Head of caudate nucleus (tissue), 42 donors: ENCODE measurements at regions of chr6 and their contacts with region 1.

Region 1: GRCh38 chr6:99590728-99591672 is 15.6 kb upstream of the PRDM13 start:
- DNase-seq: no peak

Region 2: GRCh38 chr6:99790679-99791078 is 199.7 kb after region 1 on chr6:
- intact Hi-C with region 1: no loop called
- DNase-seq: no peak

Region 3: DNA sequence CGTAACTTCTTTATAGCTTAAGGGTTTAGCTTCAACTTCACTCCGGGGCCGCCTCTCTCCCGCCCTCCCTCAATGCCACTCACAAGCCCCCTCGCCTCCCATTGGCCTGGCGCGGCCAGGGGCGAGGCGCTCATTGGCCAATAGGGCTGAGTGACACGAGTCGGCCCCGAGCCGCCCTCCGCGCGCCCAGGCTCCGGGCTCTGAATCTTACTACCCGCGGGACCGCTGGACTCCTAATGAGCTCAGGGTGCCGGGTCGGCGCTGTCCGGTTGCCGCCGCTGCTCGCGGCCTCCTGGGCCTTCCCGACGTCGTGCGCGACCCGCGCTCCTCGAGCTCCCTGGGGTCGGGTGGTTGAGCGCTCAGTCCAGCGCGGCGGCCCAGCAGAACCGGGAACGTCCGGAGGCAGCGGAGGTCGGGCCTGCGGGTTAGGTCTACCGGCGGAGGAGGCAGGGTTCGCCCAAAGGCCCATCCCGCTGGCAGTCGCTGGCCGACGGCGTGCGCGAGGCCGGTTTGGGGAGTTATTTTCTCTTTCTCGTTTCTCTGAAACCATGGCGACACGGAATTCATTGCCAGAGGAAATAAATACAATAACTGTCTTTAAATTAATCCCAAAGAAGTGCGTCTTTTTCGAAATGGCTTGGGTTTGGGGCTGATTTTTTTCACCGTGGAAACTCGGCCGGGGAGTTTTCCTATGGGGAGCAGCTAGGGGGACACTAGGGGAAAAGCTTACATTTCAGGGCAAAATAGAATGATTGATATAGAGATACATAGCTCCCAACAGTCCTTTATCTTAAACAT is 874.1 kb after region 1 on chr6 and contains the start of gene SIM1:
- intact Hi-C with region 1: loop called (anchors 10 kb)
- DNase-seq: peak in 4 of 42 donors; percentile 20 to 47 (median 38)